Transverse colon (tissue), 4 donors: ENCODE measurements at regions of chr3 and their contacts with region 1.

Region 1: DNA sequence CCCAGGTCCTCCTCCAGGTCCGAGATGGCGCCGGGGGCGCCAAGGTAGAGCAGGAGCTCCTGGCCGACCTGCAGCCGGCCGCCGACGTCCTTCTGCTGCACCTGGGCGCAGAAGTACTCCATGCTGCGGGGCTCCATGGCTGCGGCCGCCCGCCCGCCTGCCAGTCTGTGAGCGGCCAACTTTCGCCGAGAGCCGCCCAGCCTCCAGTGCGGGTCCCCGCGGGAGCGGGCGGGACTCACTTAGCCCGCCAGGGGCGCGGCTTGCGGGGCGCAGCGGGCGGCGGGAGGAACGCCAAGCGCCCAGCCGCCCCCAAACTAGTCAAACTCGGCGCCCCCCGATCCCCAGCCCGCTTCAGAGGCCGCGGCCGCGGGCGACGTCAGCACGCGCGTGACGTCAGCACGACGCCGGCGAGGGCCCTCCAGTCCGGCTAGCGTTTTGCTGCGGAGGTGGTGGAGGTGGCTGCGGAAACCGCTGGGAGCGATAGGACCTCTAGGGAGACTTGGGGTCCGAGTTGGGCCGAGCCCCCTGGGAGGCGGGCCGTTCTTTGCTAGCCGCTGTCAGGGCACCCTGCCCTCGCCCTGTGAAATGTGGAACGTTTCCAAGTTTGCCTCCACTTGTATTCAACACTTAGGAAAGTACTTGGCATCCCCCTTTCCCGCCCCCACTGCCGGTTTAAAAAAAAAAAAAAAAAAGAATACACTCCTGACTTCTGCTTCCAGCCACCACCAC is at the start of gene CLASP2:
- DNase-seq: peak; percentile 91
- H3K4me3 ChIP-seq: peak within 1 kb of the TSS; percentile 53 to 95 (median 84)
- H3K27ac ChIP-seq: peak within 1 kb of the TSS; percentile 94 to 99 (median 99)
- H3K4me1 ChIP-seq: peaks cover 0 to 14% (median 12%) of the 10 kb centered on the region in 4 donors
- H3K27me3 ChIP-seq: no peaks in the 10 kb centered on the region
- CTCF ChIP-seq: peak in 2 of 5 experiments; percentile 10 to 15
- EP300 ChIP-seq: no peak
- POLR2A ChIP-seq: peak; percentile 74
- total RNA-seq, gene CLASP2: 50.0 to 119 (median 56.6) TPM

Region 2: DNA sequence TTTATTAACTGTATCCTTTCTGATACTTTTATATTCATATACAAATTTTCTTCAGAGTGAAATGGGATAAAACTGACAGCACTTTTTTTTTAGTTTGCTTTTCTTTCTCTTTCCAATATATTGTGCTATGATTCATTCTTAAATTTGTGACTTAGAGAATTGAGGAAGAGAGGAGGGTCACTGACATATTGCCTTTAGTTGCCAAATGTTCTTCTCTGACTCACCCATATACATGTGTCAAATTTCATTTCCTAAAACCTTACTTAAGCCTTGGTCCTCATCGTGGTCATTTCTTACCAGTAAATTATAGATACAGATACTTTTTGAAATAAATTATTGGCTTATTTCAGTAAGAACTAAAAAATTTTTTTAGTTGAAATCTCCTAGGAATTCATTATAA is 53.8 kb before region 1 on chr3:
- in situ Hi-C with region 1: no loop called
- intact Hi-C with region 1: loop called (anchors 10 kb)
- DNase-seq: no peak
- H3K4me3 ChIP-seq: no peak overlapping the region
- H3K27ac ChIP-seq: no peak overlapping the region
- H3K4me1 ChIP-seq: peaks cover 0 to 12% (median 11%) of the 10 kb centered on the region in 4 donors
- H3K27me3 ChIP-seq: no peaks in the 10 kb centered on the region
- CTCF ChIP-seq: no peak
- EP300 ChIP-seq: no peak
- POLR2A ChIP-seq: no peak

Region 3: GRCh38 chr3:33787328-33788009 is 69.4 kb after region 1 on chr3:
- in situ Hi-C with region 1: loop called in 1 of 4 experiments (anchors 10 kb)
- intact Hi-C with region 1: no loop called
- DNase-seq: peak; percentile 68
- H3K4me3 ChIP-seq: peak overlapping the region in 1 of 4 donors; percentile 32
- H3K27ac ChIP-seq: no peak overlapping the region
- H3K4me1 ChIP-seq: peaks cover 0 to 4% (median 2%) of the 10 kb centered on the region in 4 donors
- H3K27me3 ChIP-seq: no peaks in the 10 kb centered on the region
- CTCF ChIP-seq: peak; percentile 70 to 74 (median 71)
- EP300 ChIP-seq: no peak
- POLR2A ChIP-seq: no peak